Caco-2 (cell line): ENCODE measurements at regions of chr2 and their contacts with region 1.

Region 1: DNA sequence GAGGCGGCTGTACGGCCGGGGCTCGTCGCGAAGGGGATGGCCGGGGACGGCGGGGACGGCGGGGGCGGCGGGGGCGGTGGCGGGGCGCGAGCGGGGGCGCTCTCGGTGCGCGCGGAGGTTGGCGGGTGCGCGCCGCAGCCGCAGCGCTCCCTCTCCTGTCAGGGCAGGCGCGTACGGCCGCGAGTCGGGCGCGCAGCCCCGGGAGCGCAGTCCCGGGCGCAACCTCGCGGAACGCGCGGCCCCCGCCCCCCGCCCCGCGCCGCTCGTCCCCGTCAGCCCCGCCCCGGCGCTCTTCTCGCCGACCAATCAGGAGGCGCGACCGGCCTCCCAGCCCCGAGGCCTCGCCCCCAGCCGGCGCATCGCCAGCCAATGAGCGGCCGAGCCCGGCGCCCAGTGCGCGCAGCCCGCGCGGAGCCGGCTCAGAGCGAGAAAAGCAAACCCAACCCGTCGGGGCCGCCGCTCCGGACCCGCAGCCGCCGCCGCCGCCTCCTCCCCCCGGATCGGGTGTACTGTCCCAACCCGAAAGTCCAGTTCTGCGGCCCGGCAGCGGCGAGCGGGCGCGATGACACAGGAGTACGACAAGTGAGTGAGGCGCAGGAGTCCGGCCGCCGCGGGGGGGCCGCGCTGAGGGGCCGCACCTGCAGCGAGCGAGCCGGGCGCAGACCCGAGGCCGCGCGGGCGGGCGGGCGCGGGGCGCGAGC is at the start of gene GRHL1:
- DNase-seq: peak; percentile 92 to 98
- H3K4me3 ChIP-seq: peak within 1 kb of the TSS; percentile 86
- H3K4me3 Mint-ChIP-seq: peak within 1 kb of the TSS; percentile 79
- H3K27ac Mint-ChIP-seq: peak within 1 kb of the TSS; percentile 7
- H3K4me1 ChIP-seq: peaks cover 26% of the 10 kb centered on the region
- H3K4me1 Mint-ChIP-seq: peaks cover 14% of the 10 kb centered on the region
- H3K27me3 ChIP-seq: no peaks in the 10 kb centered on the region
- H3K27me3 Mint-ChIP-seq: peaks cover 4% of the 10 kb centered on the region
- CTCF ChIP-seq: no peak
- total RNA-seq, gene GRHL1: 10.5 and 11.6 TPM in 2 replicates

Region 2: DNA sequence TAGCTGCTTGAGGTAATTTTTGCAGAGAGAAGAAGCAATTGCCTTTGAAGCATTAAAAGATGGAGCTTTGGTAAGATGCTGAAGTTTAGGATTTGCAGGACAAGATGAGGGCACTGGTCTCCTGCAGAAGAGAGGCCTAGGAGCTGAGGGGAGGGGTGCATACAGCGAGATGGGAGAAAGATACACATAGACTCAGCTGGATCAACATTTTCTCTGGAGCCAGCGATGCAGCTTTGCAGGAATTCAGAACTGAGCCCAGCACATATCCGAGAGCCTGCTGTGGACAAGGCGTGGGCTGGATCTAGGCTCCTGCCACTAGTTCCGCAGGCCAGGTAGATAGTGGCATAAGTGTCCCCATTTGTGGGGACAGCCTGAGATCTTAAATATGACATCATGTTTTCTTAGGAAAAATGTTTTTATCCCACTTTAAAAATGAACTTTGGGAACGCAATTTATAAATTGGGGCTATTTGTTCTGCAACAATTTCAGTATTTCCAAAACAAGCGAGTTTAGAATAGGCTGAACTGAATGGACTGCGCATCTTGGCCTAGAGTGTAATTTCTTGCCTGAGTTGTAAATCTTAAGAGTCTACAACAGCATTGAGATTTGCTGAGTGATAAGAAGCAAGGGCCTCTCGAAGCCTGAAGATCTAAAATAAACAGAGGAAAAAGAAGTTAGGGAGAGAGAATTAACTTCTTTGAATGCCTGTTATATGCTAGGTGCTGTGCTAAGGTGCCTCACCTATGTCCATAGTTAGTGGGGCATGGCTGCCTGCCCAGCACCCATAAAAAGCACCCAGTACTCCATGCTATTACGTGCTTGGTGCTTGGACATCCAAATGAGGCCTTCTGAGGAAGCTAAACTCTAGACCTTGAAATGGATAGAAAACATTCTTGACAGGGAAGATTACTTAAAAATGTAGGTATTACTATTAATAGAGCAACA is 17.4 kb after region 1 on chr2:
- CTCF ChIA-PET with region 1: no interaction called
- POLR2A ChIA-PET with region 1: no interaction called
- intact Hi-C with region 1: loop called (anchors 2 kb)
- DNase-seq: no peak
- H3K4me3 ChIP-seq: no peak overlapping the region
- H3K4me3 Mint-ChIP-seq: no peak overlapping the region
- H3K27ac Mint-ChIP-seq: no peak overlapping the region
- H3K4me1 ChIP-seq: peaks cover 7% of the 10 kb centered on the region; the same call in 1 of the 2 replicates
- H3K4me1 Mint-ChIP-seq: peaks cover 17% of the 10 kb centered on the region
- H3K27me3 ChIP-seq: no peaks in the 10 kb centered on the region
- H3K27me3 Mint-ChIP-seq: no peaks in the 10 kb centered on the region
- CTCF ChIP-seq: no peak